ENCODE measurements at regions of chr5 and their contacts with region 1.

Region 1: GRCh38 chr5:34915139-34915855 is at the starts of genes BRIX1 and RAD1:
- DNase-seq: peak; percentile 88 to 98
- H3K4me3 ChIP-seq: peak within 1 kb of the TSS; percentile 89 to 93
- H3K27ac ChIP-seq: peak within 1 kb of the TSS; percentile 85 to 87
- H3K4me1 ChIP-seq: peaks cover 0 to 18% of the 10 kb centered on the region in 2 donors
- H3K27me3 ChIP-seq: no peaks in the 10 kb centered on the region
- CTCF ChIP-seq: peak in 1 of 3 experiments; percentile 22
- total RNA-seq, gene BRIX1: 8.5 TPM
- total RNA-seq, gene RAD1: 2.0 TPM

Region 2: DNA sequence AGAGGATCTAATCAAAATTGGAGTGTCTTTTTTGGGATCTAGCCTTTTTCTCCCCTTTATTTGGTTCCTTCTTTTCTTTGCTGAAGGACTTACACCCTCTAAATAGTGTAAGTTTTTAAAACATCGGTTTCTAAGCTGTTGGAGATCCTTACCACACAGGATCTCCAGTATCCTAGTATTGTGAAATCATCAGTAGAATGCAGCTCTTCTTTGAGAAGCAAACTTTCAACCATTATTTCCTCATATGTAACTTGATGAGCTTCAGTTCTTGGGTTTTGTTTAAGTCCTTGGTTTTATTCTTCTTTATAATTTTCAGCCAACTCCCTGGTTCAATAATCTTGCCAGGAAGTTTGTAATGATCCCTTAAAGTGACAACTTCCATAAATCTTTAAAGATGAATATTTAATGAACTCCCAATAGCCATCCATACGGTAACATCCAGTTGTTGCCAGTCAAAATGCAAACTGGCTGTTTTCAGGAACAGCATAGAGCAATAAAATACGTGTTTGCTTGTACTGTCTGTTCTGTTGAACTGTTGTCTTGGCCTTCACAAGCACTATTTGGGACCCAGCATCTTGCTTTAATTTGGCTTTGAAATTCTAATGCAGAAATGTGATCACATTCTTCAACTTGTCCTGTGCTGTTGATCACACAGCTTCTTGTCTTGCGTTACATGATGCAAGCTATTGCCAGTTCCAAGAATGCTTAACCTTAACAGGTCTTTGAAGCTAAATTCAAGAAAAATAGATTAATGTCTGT is 111.1 kb before region 1 on chr5:
- intact Hi-C with region 1: no loop called
- DNase-seq: no peak
- H3K4me3 ChIP-seq: no peak overlapping the region
- H3K27ac ChIP-seq: no peak overlapping the region
- H3K4me1 ChIP-seq: no peaks in the 10 kb centered on the region
- H3K27me3 ChIP-seq: no peaks in the 10 kb centered on the region
- CTCF ChIP-seq: no peak

Region 3: DNA sequence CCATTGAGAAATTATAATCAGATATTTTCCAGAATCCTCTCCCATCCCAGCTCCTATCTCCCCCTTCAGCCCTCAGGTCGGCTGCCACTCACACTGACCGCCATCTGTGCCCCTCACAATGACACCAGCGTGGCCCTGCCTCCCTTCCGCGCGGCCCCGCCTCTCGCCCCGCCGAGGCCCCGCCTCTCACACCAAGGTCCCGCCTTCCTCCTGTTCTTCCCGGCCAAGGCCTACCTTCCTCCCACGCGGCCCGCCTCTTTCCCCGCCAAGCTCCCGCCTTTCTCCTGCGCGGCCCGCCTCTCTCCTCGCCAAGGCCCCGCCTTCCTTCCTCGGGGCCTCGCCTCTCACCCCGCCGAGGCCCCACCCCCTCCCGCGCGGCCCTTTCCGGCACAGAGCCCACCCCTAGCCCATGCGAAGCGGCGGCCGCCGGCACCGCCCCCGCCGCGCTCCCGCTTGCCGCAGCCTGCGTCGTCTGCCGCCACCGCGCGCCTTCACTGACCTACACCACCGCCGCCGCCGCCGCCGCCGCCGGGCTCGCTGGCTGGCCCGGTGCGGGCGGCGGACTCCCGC is 13.9 kb after region 1 on chr5 and contains the start of gene DNAJC21:
- intact Hi-C with region 1: loop called (anchors 1 kb)
- DNase-seq: peak; percentile 92 to 99
- H3K4me3 ChIP-seq: peak within 1 kb of the TSS; percentile 64 to 72
- H3K27ac ChIP-seq: peak within 1 kb of the TSS; percentile 87 to 98
- H3K4me1 ChIP-seq: peaks cover 0 to 15% of the 10 kb centered on the region in 2 donors
- H3K27me3 ChIP-seq: no peaks in the 10 kb centered on the region
- CTCF ChIP-seq: no peak
- total RNA-seq, gene DNAJC21: 30.5 TPM

Measured in ascending aorta (tissue), 2 donors.